ENCODE measurements at regions of chr12 and their contacts with region 1.

Region 1: DNA sequence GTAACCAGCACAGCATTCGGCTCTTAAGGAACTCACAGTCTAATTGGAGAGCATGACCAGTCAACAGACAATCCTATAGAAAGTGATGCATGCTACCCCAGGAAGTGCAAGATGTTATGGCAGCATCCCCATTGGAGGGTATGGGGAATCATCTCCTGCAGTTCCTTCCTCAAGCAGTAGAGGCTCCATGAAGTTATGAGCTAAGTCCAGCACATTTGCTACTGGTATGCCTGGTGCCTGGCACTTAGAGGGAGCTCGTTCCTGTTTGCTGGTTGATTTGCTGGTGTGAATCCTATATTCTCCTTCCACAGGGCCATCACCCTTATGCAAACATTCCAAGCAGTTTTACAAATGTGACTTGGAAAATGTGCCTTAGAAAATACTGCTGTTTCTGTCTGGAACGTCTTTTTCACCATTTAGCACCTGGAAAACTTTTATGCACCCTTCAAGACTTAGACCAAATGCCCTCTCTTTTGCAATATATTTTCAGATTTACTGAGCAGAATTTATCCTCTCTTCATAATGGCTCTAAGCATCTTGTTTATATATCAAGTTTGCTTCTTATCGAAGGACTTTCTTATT is 136.1 kb upstream of the WSCD2 start:
- DNase-seq: peak; percentile 56
- ATAC-seq: peak; percentile 99
- H3K4me3 ChIP-seq: no peak overlapping the region
- H3K27ac ChIP-seq: no peak overlapping the region
- H3K4me1 ChIP-seq: no peaks in the 10 kb centered on the region
- H3K27me3 ChIP-seq: peaks cover 7% of the 10 kb centered on the region; the same call in 1 of the 2 replicates
- CTCF ChIP-seq: peak; percentile 51 to 67 (median 67); a peak in 5 of 6 replicates
- POLR2A ChIP-seq: no peak
- RAD21 ChIP-seq: peak; percentile 33

Region 2: GRCh38 chr12:107356266-107356936 is 636.6 kb before region 1 on chr12:
- CTCF ChIA-PET with region 1: no interaction called
- POLR2A ChIA-PET with region 1: no interaction called
- RAD21 ChIA-PET with region 1: no interaction called
- intact Hi-C with region 1: no loop called
- DNase-seq: no peak
- ATAC-seq: peak; percentile 78
- H3K4me3 ChIP-seq: no peak overlapping the region
- H3K27ac ChIP-seq: no peak overlapping the region
- H3K4me1 ChIP-seq: peaks cover 10 to 28% of the 10 kb centered on the region in 2 experiments
- H3K27me3 ChIP-seq: no peaks in the 10 kb centered on the region
- CTCF ChIP-seq: no peak
- POLR2A ChIP-seq: no peak
- RAD21 ChIP-seq: no peak

Region 3: DNA sequence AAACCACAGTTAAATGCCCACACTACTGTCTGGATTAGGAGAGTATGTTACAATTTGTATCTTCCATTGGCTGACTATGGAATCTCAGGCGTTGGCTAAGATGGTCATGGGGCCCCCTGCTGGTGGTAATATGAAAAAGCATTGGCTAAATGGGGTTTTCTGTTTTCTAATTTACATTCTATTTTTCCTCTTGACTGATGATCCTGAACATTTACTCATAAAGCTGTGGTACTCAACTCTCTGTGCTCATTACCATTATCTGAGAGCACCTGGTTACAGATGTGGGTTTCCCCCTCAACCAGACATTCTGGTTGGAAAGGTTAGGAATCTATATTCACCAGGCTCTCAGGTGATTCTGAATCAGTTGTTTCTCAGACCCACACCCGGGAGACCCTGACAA is 201.0 kb after region 1 on chr12:
- CTCF ChIA-PET with region 1: interaction called, 4 read pairs
- POLR2A ChIA-PET with region 1: no interaction called
- RAD21 ChIA-PET with region 1: no interaction called
- intact Hi-C with region 1: loop called (anchors 5 kb)
- DNase-seq: peak; percentile 2
- ATAC-seq: no peak
- H3K4me3 ChIP-seq: no peak overlapping the region
- H3K27ac ChIP-seq: no peak overlapping the region
- H3K4me1 ChIP-seq: no peaks in the 10 kb centered on the region
- H3K27me3 ChIP-seq: peaks cover 26% of the 10 kb centered on the region
- CTCF ChIP-seq: peak; percentile 59 to 84 (median 72); a peak in 5 of 6 replicates
- POLR2A ChIP-seq: no peak
- RAD21 ChIP-seq: peak; percentile 62

Region 4: GRCh38 chr12:108237272-108237671 is 244.3 kb after region 1 on chr12:
- CTCF ChIA-PET with region 1: interaction called, 10 read pairs
- POLR2A ChIA-PET with region 1: no interaction called
- RAD21 ChIA-PET with region 1: no interaction called
- intact Hi-C with region 1: loop called (anchors 2 kb)
- DNase-seq: peak; percentile 40
- ATAC-seq: peak; percentile 96
- H3K4me3 ChIP-seq: no peak overlapping the region
- H3K27ac ChIP-seq: no peak overlapping the region
- H3K4me1 ChIP-seq: peaks cover 0 to 3% of the 10 kb centered on the region in 2 experiments; a peak in 1 of 4 replicates
- H3K27me3 ChIP-seq: peaks cover 48% of the 10 kb centered on the region
- CTCF ChIP-seq: peak; percentile 44 to 86 (median 79); a peak in 5 of 6 replicates
- POLR2A ChIP-seq: no peak
- RAD21 ChIP-seq: peak; percentile 67

Region 5: GRCh38 chr12:108337235-108338223 is 344.6 kb after region 1 on chr12:
- CTCF ChIA-PET with region 1: no interaction called
- POLR2A ChIA-PET with region 1: no interaction called
- RAD21 ChIA-PET with region 1: no interaction called
- intact Hi-C with region 1: no loop called
- DNase-seq: peak; percentile 21
- ATAC-seq: peak; percentile 94
- H3K4me3 ChIP-seq: no peak overlapping the region
- H3K27ac ChIP-seq: no peak overlapping the region
- H3K4me1 ChIP-seq: peaks cover 0 to 4% of the 10 kb centered on the region in 2 experiments; a peak in 1 of 4 replicates
- H3K27me3 ChIP-seq: no peaks in the 10 kb centered on the region
- CTCF ChIP-seq: peak; percentile 34 to 69 (median 69); a peak in 5 of 6 replicates
- POLR2A ChIP-seq: no peak
- RAD21 ChIP-seq: peak; percentile 41; the same call in 1 of the 2 replicates

Region 6: DNA sequence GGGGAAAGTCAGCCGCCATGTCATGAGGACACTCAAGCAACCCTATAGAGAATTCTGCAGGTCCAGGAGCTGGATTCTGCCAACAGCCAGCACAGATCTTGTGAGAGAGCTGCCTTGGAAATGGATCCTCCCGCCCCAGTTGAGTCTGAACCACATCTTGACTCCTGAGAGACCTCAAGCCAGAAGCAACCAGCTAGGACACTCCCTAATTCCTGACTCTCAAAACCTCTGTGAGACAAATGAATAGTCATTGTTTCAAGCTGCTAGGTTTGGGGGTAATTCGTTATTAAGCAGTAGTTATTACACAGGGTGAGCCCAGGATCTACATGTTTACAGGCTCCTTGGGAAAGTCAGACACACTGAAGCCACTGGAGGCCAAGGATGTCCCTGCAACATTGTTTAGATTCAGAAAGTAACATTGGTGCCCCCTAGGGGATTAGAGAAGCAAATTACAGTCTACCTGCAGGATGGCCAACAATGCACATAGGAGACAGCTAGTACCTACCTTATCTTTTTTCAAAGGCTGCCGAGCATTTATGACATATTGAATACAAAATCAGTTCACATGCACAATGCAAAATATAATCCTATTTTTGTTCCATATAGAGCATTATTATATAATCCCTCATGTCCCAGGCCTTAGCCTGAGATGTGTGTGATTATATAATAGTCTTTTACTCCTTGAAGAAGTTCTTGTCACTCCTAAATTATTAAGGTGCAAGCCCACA is 464.2 kb after region 1 on chr12:
- CTCF ChIA-PET with region 1: interaction called, 13 read pairs
- POLR2A ChIA-PET with region 1: no interaction called
- RAD21 ChIA-PET with region 1: no interaction called
- intact Hi-C with region 1: loop called (anchors 1 kb)
- DNase-seq: peak; percentile 33
- ATAC-seq: peak; percentile 98
- H3K4me3 ChIP-seq: no peak overlapping the region
- H3K27ac ChIP-seq: no peak overlapping the region
- H3K4me1 ChIP-seq: no peaks in the 10 kb centered on the region
- H3K27me3 ChIP-seq: peaks cover 65% of the 10 kb centered on the region
- CTCF ChIP-seq: peak; percentile 66 to 70 (median 68)
- POLR2A ChIP-seq: no peak
- RAD21 ChIP-seq: peak; percentile 74

Region 7: GRCh38 chr12:108495054-108495453 is 502.1 kb after region 1 on chr12:
- CTCF ChIA-PET with region 1: interaction called, 3 read pairs
- POLR2A ChIA-PET with region 1: no interaction called
- RAD21 ChIA-PET with region 1: no interaction called
- intact Hi-C with region 1: loop called (anchors 5 kb)
- DNase-seq: peak; percentile 51
- ATAC-seq: peak; percentile 91
- H3K4me3 ChIP-seq: no peak overlapping the region
- H3K27ac ChIP-seq: no peak overlapping the region
- H3K4me1 ChIP-seq: no peaks in the 10 kb centered on the region
- H3K27me3 ChIP-seq: peaks cover 54% of the 10 kb centered on the region
- CTCF ChIP-seq: peak; percentile 67 to 95 (median 91); a peak in 5 of 6 replicates
- POLR2A ChIP-seq: no peak
- RAD21 ChIP-seq: peak; percentile 69

Region 8: DNA sequence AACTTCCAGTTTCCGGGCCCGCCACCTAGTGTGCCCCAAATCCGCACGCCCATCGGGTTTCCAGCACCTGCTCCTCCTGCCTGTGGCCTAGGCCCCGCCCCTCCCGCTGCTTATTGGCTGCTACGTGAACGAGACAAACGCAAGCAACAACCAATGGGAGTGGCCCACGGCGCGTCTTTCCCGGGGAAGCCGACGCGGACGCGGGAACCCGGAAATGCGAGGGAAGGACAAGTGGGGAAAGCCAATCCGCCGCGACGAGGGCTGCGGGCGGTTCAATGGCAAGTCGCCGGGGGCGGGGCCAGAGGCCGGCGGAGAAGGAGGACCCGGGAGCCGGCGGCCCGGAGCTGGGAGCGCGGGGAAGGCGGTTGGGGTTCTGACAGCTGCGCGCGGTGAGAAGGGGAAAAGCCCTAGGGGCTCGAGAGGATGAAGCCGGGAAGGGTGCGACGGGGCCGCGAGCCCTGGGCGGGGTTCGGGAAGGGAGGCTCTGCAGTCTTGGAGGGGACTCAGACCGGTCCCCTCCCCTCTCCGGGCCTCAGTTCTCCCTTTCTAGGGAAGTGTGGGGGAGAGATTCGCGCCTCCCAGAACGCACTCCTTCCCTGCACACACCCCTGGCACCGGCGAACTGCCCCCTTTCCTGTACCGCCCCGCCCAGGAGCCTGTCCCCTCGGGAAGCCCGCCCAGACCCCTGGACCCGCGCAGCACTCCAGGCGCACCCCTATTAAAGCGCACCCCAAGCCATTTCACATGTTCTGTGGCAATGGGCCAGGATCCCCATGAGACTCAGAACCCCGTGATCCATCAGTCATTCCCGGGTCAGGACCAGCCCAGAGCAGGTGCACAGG is 522.2 kb after region 1 on chr12 and contains the start of gene FICD:
- CTCF ChIA-PET with region 1: interaction called, 11 read pairs
- POLR2A ChIA-PET with region 1: no interaction called
- RAD21 ChIA-PET with region 1: no interaction called
- intact Hi-C with region 1: loop called (anchors 1 kb)
- DNase-seq: peak; percentile 96
- ATAC-seq: peak; percentile 90
- H3K4me3 ChIP-seq: peak within 1 kb of the TSS; percentile 89 to 94
- H3K27ac ChIP-seq: peak within 1 kb of the TSS; percentile 42; the same call in 1 of the 2 replicates
- H3K4me1 ChIP-seq: peaks cover 3 to 19% of the 10 kb centered on the region in 2 experiments; a peak in 2 of 4 replicates
- H3K27me3 ChIP-seq: no peaks in the 10 kb centered on the region
- CTCF ChIP-seq: no peak
- POLR2A ChIP-seq: no peak
- RAD21 ChIP-seq: no peak
- total RNA-seq, gene FICD: 5.1 TPM

Region 9: DNA sequence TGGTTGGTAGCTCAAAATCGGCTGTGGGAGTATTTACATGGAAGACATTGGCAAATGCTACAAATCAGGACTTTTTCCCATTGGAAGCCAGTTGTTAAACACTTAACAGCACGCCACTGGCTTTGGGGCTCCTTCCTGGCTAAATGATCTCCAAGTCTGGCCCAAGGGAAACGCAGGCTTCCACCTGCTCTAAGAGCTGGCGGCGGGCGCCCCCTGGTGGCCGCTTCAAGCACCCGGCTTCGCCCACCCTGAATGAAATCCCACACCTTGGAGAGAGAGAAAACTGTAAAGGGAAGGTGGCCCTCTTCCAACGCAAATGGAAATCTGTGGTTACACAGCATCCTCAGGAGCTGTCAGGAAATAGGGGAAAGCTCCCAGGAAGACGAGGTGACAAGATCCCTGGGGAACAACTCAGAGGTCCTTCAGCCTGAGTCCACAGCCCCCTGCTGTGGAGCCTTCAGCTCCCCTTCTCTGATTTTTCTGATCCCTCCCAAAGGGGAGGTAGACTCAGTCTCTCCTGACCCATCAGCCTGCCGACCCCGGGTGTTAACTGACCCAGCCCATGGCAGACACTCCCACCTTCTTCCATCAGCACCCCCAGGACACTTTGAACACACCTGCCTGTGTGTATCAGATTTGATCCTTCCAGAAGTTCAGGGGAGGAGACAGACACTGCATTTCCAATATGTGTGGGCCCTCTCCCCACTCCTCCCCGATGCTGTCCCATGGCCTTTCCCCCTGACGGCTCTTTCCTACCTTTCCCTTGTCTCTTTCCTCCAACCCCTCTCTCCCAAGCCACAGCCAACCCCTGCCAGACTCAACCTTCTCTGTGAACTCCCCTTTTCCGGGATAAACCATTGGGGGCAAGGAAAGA is 625.4 kb after region 1 on chr12:
- CTCF ChIA-PET with region 1: no interaction called
- POLR2A ChIA-PET with region 1: no interaction called
- RAD21 ChIA-PET with region 1: no interaction called
- intact Hi-C with region 1: loop called (anchors 5 kb)
- DNase-seq: peak; percentile 64
- ATAC-seq: peak; percentile 96
- H3K4me3 ChIP-seq: no peak overlapping the region
- H3K27ac ChIP-seq: no peak overlapping the region
- H3K4me1 ChIP-seq: peaks cover 2 to 16% of the 10 kb centered on the region in 2 experiments
- H3K27me3 ChIP-seq: no peaks in the 10 kb centered on the region
- CTCF ChIP-seq: peak; percentile 95 to 99 (median 96)
- POLR2A ChIP-seq: no peak
- RAD21 ChIP-seq: peak; percentile 99